ENCODE measurements at regions of chr19 and their contacts with region 1.

Region 1: GRCh38 chr19:17932485-17933338 is at the start of gene CCDC124:
- DNase-seq: peak; percentile 80
- ATAC-seq: peak; percentile 93
- H3K4me3 ChIP-seq: peak within 1 kb of the TSS; percentile 91 to 97 (median 94)
- H3K27ac ChIP-seq: peak within 1 kb of the TSS; percentile 80
- H3K4me1 ChIP-seq: peaks cover 33% of the 10 kb centered on the region
- H3K27me3 ChIP-seq: peaks cover 0 to 4% of the 10 kb centered on the region in 2 experiments; a peak in 1 of 5 replicates
- CTCF ChIP-seq: peak; percentile 97
- EP300 ChIP-seq: no peak
- POLR2A ChIP-seq: peak; percentile 36 to 88; a peak in 3 of 4 replicates
- RAD21 ChIP-seq: peak; percentile 94
- total RNA-seq, gene CCDC124: 14.9 and 16.3 TPM in 2 replicates

Region 2: GRCh38 chr19:17865364-17866311 is 67.1 kb before region 1 on chr19:
- CTCF ChIA-PET with region 1: interaction called, 32 read pairs
- POLR2A ChIA-PET with region 1: interaction called, 43 read pairs
- in situ Hi-C with region 1: loop called (anchors 5 kb)
- intact Hi-C with region 1: loop called (anchors 1 kb)
- DNase-seq: no peak
- ATAC-seq: peak; percentile 23
- H3K4me3 ChIP-seq: no peak overlapping the region
- H3K27ac ChIP-seq: peak overlapping the region; percentile 14
- H3K4me1 ChIP-seq: peaks cover 56% of the 10 kb centered on the region
- H3K27me3 ChIP-seq: peaks cover 2 to 7% of the 10 kb centered on the region in 2 experiments; a peak in 2 of 5 replicates
- CTCF ChIP-seq: no peak
- EP300 ChIP-seq: no peak
- POLR2A ChIP-seq: peak in 1 of 2 experiments; percentile 74
- RAD21 ChIP-seq: peak; percentile 18; the same call in 1 of the 2 replicates

Region 3: DNA sequence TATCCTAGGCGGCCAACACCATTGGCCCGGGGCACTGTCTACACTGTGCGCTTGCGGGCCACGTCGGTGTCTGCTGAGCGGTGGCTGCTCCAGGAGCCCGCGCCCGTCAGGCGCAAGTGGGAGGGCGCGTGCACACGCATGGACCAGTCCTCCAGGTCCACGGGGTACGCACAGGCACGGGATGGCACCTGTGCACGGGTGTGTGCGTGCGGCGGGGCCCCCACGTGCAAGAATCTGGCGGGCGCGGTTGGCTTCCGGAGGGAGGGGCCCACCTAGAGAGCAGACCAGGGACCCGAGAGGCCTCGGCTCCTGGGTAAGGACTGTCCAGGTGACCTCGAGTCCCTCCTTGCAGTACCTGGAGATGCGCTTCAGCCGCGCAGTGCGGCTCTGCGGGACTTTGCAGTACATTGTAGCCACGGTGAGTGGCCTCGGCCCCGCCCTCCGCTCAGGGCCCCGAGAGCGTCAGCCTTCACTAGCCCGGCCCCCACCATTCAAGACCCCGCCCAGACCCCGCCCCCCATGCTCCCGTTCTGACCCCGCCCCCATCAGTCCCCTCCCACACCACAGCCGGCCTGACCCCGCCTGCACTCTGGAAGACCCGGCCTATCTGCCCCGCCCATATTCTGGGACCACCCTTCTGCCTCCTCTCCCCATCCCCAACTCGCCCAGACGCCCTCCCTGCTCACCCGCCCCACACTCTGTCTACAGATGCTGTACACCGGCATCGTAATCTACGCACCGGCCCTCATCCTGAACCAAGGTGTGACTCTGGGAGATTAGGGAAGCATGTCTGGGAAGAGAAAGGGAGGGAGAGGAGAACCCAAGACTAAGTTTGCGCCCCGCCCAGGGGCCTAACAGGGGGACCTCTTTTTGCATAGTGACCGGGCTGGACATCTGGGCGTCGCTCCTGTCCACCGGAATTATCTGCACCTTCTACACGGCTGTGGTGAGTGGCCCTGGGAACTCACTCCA is 58.6 kb before region 1 on chr19:
- CTCF ChIA-PET with region 1: interaction called, 32 read pairs
- POLR2A ChIA-PET with region 1: interaction called, 9 read pairs
- in situ Hi-C with region 1: loop called (anchors 5 kb)
- intact Hi-C with region 1: loop called (anchors 1 kb)
- DNase-seq: no peak
- ATAC-seq: peak; percentile 50
- H3K4me3 ChIP-seq: peak overlapping the region; percentile 15 to 64 (median 22); a peak in 2 of 6 replicates
- H3K27ac ChIP-seq: no peak overlapping the region
- H3K4me1 ChIP-seq: peaks cover 6% of the 10 kb centered on the region
- H3K27me3 ChIP-seq: peaks cover 5 to 33% of the 10 kb centered on the region in 2 experiments
- CTCF ChIP-seq: no peak
- EP300 ChIP-seq: no peak
- POLR2A ChIP-seq: no peak
- RAD21 ChIP-seq: no peak

Region 4: DNA sequence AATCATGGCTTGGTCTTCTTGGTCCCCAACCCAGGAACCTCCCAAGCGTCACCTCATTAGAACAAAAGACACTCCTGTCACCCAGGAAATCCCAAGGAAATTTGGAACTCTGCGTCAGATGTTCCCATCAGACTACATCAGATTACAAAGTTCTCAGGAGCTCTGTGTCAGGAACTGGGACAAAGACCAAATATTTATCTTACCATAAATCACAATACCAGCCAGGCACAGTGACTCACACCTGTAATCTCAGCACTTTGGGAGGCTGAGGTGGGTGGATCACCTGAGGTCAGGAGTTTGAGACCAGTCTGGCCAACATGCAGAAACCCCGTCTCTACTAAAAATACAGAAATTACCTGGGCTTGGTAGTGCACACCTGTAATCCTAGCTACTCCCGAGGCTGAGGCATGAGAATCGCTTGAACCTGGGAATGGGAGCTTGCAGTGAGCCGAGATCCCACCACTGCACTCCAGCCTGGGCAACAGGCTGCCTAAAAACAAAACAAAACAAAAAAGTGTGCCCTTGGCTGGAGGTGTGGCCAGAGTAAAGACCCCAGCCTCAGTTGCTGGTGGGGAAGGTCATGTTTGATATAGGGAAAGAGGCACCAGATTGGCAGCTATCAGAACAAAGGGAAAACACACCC is 16.6 kb before region 1 on chr19:
- CTCF ChIA-PET with region 1: no interaction called
- POLR2A ChIA-PET with region 1: no interaction called
- in situ Hi-C with region 1: no loop called
- intact Hi-C with region 1: no loop called
- DNase-seq: no peak
- ATAC-seq: no peak
- H3K4me3 ChIP-seq: no peak overlapping the region
- H3K27ac ChIP-seq: no peak overlapping the region
- H3K4me1 ChIP-seq: peaks cover 13% of the 10 kb centered on the region
- H3K27me3 ChIP-seq: no peaks in the 10 kb centered on the region
- CTCF ChIP-seq: no peak
- EP300 ChIP-seq: no peak
- POLR2A ChIP-seq: no peak
- RAD21 ChIP-seq: no peak

Region 5: DNA sequence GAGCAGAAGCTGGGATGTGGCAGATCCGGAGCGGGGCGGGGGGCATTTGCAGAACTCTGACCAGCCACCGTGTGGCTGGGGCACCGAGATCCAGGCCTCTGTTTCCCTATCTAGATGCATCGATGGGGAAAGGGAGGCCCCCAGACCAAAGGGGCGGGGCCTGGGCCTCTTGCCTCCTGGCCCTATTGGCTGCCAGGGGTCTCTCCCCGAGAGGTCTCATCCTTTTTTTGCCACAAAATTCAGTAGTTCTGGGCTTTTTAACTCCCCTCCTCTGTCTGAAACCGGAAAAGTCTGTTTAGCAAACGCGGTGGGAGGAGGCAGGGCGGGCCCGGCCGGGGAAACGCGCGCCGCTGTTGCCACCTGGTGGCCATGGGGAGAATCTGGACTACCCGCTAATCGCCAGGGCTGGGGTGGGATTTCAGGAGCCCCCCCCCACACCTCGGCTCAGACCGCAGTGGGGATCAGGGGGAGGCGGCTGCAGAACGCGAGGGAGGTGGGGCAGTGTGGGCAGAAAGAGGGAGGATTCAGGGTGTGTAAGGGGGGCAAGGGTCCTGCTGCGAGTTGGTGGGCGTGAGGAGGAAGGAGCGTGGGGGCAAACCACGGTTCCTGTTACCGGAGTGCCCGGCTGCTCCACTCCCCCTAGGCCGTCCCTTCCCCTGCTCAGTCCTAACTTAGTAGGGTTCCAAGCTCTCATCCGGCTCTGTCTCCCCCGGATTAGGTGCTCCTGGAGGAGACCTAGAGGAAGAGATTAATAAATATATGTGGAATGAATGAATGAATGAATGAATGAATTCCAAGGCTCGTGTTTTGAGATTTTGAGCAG is 125.7 kb after region 1 on chr19:
- CTCF ChIA-PET with region 1: interaction called, 5 read pairs
- POLR2A ChIA-PET with region 1: no interaction called
- in situ Hi-C with region 1: loop called (anchors 25 kb)
- intact Hi-C with region 1: no loop called
- DNase-seq: peak; percentile 47
- ATAC-seq: peak; percentile 85
- H3K4me3 ChIP-seq: peak overlapping the region in 1 of 3 experiments; percentile 60; a peak in 2 of 6 replicates
- H3K27ac ChIP-seq: no peak overlapping the region
- H3K4me1 ChIP-seq: peaks cover 17% of the 10 kb centered on the region
- H3K27me3 ChIP-seq: peaks cover 0 to 6% of the 10 kb centered on the region in 2 experiments; a peak in 2 of 5 replicates
- CTCF ChIP-seq: peak; percentile 97
- EP300 ChIP-seq: no peak
- POLR2A ChIP-seq: no peak
- RAD21 ChIP-seq: peak; percentile 95